ENCODE measurements at regions of chr9 and their contacts with region 1.

Region 1: GRCh38 chr9:130682490-130683121 is 11.0 kb upstream of the EXOSC2 start:
- DNase-seq: peak; percentile 92
- ATAC-seq: peak; percentile 74

Region 2: GRCh38 chr9:130107234-130107861 is 575.3 kb before region 1 on chr9:
- intact Hi-C with region 1: loop called (anchors 10 kb)
- DNase-seq: peak; percentile 88
- ATAC-seq: peak; percentile 85

Region 3: GRCh38 chr9:130444565-130445221 is 237.9 kb before region 1 on chr9 and contains the start of gene ASS1:
- intact Hi-C with region 1: no loop called
- DNase-seq: peak; percentile 77
- ATAC-seq: peak; percentile 73
- total RNA-seq, gene ASS1: 84.8 TPM

Region 4: GRCh38 chr9:130461218-130461630 is 221.4 kb before region 1 on chr9:
- intact Hi-C with region 1: loop called (anchors 1 kb)
- DNase-seq: peak; percentile 76
- ATAC-seq: peak; percentile 60

Region 5: DNA sequence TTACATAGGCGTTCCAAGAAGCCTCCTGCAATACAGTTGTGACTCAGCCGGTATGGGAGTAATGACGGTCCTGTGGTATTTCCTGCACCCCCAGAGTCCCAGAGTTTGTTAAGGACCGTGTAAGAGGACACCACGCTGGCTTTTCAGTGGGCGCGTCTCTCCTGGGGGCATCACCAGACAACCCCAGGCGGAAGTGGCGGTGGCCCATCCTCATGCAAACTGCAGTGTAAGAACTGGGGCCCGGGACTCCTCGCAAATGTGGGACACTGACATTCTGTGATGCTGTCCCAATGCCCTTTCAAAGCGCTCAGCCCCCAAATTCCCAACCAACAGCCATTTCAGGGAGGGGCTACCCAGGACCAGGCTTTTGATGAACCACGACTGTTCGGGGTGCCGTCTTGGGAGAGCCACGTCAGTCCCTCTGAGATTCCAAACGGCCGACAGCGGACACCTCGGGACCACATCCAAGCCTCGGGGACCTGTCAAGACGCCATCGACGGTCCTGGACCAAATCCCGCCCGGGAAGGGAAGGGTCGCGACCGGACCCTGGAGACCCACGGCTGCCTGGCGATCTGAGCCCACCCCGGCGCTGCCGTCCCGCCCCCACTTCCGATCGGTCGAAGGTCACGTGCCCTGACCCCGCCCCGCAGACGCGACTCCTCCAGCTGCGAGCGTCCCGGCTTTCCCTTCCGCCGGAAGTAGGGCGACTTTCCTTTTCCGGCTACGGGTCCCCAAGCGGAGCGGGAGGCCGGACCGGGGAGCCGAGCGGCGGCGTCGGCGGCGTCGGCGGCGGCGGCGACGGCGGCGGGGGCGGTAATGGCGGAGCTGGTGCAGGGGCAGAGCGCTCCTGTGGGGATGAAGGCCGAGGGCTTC is 103.5 kb before region 1 on chr9 and contains the start of gene FUBP3:
- intact Hi-C with region 1: loop called (anchors 10 kb)
- DNase-seq: peak; percentile 97
- ATAC-seq: peak; percentile 95
- total RNA-seq, gene FUBP3: 21.9 TPM

Region 6: GRCh38 chr9:130626249-130626992 is 56.2 kb before region 1 on chr9:
- intact Hi-C with region 1: loop called (anchors 1 kb)
- DNase-seq: peak; percentile 64
- ATAC-seq: no peak